Activated CD4-positive, alpha-beta memory T cell treated with anti-CD3 and anti-CD28 coated beads for 36 hours (primary cell): ENCODE measurements at regions of chr20 and their contacts with region 1.

Region 1: DNA sequence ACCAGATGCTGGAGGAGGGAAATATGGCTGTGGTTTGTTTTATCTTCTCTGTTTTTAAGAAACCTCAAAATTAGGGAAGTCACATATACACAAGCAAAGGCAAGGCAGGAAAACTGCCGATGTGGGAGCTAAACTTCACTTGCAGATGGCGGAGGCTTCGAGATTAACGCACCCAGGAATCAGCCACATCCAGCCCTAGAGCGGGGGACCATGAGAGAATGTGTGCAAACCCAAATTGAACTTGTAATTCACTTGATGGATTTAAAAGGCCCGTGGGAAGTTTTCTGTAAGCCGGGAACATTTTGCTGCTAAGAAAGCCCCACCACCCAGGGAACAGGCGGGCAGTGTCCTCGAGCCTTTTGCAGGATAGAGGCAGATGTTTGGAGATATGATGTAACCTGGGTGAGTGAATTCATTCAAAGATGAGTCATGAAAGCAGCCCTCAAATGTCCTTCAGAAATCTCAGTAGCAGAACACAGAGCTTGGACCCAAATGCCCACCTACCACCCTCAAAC is 39.9 kb downstream of the PREX1 start:
- DNase-seq: no peak
- H3K4me3 Mint-ChIP-seq: no peak overlapping the region
- H3K27ac Mint-ChIP-seq: peak overlapping the region; percentile 81
- H3K4me1 Mint-ChIP-seq: peaks cover 53% of the 10 kb centered on the region
- H3K27me3 Mint-ChIP-seq: no peaks in the 10 kb centered on the region

Region 2: DNA sequence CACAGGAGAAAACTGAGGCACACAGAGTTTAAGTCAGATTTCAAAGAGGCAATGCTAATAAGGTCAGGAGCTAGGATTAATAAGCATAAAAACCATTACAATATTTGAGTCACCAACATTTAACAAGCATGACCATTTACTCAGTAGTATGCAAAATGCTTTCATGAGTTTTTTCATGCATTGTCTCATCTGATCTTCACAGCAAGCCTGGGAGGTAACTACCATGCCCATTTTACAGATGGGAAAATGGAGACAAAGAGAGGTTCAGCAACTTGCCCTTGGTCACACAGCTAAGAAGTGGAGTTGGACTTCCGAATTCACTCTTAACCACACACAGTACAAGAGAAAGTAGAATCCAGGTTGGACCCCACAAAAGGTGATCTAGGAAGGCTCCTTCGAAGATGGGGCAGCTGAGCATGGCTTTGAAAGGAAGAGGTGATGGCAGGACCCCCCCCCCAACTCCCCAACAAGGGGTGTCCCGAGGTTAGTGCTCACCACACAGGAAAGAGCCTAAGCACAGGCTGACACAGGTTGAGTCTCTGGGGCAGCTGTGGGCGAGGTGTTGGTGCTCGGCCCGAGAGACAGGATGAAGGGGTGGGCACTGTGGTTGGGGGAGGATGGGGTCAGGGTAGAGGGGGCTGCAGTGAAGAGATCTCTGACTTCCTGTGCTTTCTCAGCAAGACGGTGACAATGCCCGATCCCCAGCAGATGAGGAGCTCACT is 68.9 kb before region 1 on chr20:
- CTCF ChIA-PET with region 1: no interaction called
- POLR2A ChIA-PET with region 1: interaction called, 3 read pairs
- intact Hi-C with region 1: loop called (anchors 1 kb)
- DNase-seq: peak; percentile 70
- H3K4me3 Mint-ChIP-seq: peak overlapping the region; percentile 54
- H3K27ac Mint-ChIP-seq: peak overlapping the region; percentile 79
- H3K4me1 Mint-ChIP-seq: peaks cover 88% of the 10 kb centered on the region
- H3K27me3 Mint-ChIP-seq: no peaks in the 10 kb centered on the region

Region 3: GRCh38 chr20:48760403-48760983 is 27.4 kb before region 1 on chr20:
- CTCF ChIA-PET with region 1: no interaction called
- POLR2A ChIA-PET with region 1: interaction called, 3 read pairs
- intact Hi-C with region 1: loop called (anchors 2 kb)
- DNase-seq: peak; percentile 84
- H3K4me3 Mint-ChIP-seq: peak overlapping the region; percentile 52
- H3K27ac Mint-ChIP-seq: peak overlapping the region; percentile 97
- H3K4me1 Mint-ChIP-seq: peaks cover 86% of the 10 kb centered on the region
- H3K27me3 Mint-ChIP-seq: no peaks in the 10 kb centered on the region

Region 4: GRCh38 chr20:48769069-48769879 is 18.6 kb before region 1 on chr20:
- CTCF ChIA-PET with region 1: interaction called, 3 read pairs
- POLR2A ChIA-PET with region 1: interaction called, 7 read pairs
- intact Hi-C with region 1: loop called (anchors 1 kb)
- DNase-seq: peak; percentile 98
- H3K4me3 Mint-ChIP-seq: peak overlapping the region; percentile 59
- H3K27ac Mint-ChIP-seq: peak overlapping the region; percentile 91
- H3K4me1 Mint-ChIP-seq: peaks cover 93% of the 10 kb centered on the region
- H3K27me3 Mint-ChIP-seq: no peaks in the 10 kb centered on the region

Region 5: DNA sequence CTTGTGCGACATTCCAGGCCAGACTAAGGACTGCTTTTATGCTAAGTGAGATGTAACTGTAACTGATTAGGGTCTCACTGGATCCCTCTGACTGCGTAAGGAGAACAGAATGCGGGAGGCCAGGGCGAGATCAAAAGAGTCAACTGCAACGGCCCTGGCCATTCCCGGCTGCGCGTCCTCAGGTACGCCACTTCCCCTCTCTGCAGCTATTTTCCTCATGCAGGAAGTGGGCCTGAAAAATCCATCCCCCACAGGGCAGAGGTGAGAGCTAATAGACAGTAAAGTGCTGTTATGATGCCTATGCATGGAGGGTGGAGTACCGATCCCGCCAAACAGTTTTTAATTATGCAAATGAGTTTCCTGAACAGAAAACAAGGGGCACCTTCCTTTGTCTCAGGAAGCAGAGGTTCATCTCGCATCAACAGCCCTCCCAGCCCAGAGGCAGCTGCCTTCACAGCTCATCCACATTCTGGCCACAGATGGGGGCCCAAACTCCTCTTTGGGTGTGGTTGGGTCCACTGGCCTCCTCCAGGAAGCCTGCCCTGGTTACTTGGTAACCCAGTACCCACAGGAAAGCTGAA is 30.6 kb after region 1 on chr20:
- CTCF ChIA-PET with region 1: interaction called, 4 read pairs
- POLR2A ChIA-PET with region 1: interaction called, 13 read pairs
- intact Hi-C with region 1: loop called (anchors 1 kb)
- DNase-seq: peak; percentile 70
- H3K4me3 Mint-ChIP-seq: peak overlapping the region; percentile 51
- H3K27ac Mint-ChIP-seq: peak overlapping the region; percentile 98
- H3K4me1 Mint-ChIP-seq: peaks cover 89% of the 10 kb centered on the region
- H3K27me3 Mint-ChIP-seq: no peaks in the 10 kb centered on the region

Region 6: GRCh38 chr20:49078296-49078695 is 290.4 kb after region 1 on chr20:
- CTCF ChIA-PET with region 1: no interaction called
- POLR2A ChIA-PET with region 1: no interaction called
- intact Hi-C with region 1: no loop called
- DNase-seq: no peak
- H3K4me3 Mint-ChIP-seq: no peak overlapping the region
- H3K27ac Mint-ChIP-seq: no peak overlapping the region
- H3K4me1 Mint-ChIP-seq: peaks cover 8% of the 10 kb centered on the region
- H3K27me3 Mint-ChIP-seq: no peaks in the 10 kb centered on the region